Thyroid gland (tissue), 4 donors: ENCODE measurements at regions of chr19 and their contacts with region 1.

Region 1: GRCh38 chr19:36054119-36054732 is at the start of gene THAP8:
- DNase-seq: peak; percentile 100
- H3K4me3 ChIP-seq: peak within 1 kb of the TSS; percentile 39 to 73 (median 50)
- H3K27ac ChIP-seq: peak within 1 kb of the TSS; percentile 89 to 96 (median 91)
- H3K4me1 ChIP-seq: peaks cover 6 to 8% of the 10 kb centered on the region in 2 donors
- H3K27me3 ChIP-seq: no peaks in the 10 kb centered on the region
- CTCF ChIP-seq: peak in 5 of 6 experiments; percentile 13 to 74 (median 69)
- POLR2A ChIP-seq: peak; percentile 39 to 80
- total RNA-seq, gene THAP8: 5.0 to 14.2 (median 10.1) TPM

Region 2: GRCh38 chr19:36014029-36014924 is 39.9 kb before region 1 on chr19 and contains the start of gene ALKBH6:
- intact Hi-C with region 1: loop called (anchors 5 kb)
- DNase-seq: peak; percentile 100
- H3K4me3 ChIP-seq: peak within 1 kb of the TSS in 2 of 3 donors; percentile 53 to 66
- H3K27ac ChIP-seq: peak within 1 kb of the TSS; percentile 62 to 78 (median 68)
- H3K4me1 ChIP-seq: peaks cover 18% of the 10 kb centered on the region in 2 donors
- H3K27me3 ChIP-seq: no peaks in the 10 kb centered on the region
- CTCF ChIP-seq: no peak
- POLR2A ChIP-seq: peak in 1 of 2 donors; percentile 45
- total RNA-seq, gene ALKBH6: 15.4 to 60.9 (median 32.0) TPM

Region 3: DNA sequence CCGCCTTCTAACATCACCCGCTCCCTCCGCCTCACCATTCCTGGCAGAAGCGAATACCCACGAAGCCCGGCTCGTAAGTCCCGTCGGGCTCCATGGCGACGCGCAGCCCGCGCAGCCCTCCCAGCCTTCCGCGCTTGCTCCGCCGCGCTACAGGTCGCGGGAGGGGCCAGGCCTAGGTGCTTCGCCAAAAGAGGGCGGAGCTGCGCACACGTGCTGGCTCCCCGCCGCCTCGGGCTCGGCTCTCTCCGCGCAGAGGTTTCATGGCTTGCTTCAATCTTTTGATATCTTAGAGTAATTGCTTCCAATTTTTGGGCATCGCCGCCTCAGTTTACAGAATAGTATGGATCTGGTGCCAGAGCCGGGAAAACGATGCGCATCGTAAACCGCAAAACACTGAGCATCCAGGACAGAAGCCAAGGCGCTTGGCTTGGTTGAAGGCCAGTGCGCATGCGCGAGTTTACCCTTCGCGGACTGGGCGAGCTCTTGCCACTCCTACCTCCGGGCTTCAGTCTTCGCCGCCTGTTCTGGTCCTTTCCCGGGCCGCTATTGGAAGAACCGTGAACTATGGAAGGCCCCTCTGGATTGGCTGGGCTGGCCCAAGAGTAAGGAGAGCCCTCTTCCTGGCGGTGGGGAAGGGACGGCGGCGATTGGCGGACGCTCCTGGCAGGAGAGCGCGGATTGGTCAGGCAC is 60.7 kb after region 1 on chr19 and contains the start of gene POLR2I:
- intact Hi-C with region 1: loop called (anchors 5 kb)
- DNase-seq: peak; percentile 99
- H3K4me3 ChIP-seq: peak within 1 kb of the TSS; percentile 13 to 87 (median 60)
- H3K27ac ChIP-seq: peak within 1 kb of the TSS; percentile 24 to 84 (median 68)
- H3K4me1 ChIP-seq: peaks cover 15 to 16% of the 10 kb centered on the region in 2 donors
- H3K27me3 ChIP-seq: no peaks in the 10 kb centered on the region
- CTCF ChIP-seq: no peak
- POLR2A ChIP-seq: peak in 1 of 2 donors; percentile 71
- total RNA-seq, gene POLR2I: 53.7 to 101 (median 76.9) TPM

Region 4: DNA sequence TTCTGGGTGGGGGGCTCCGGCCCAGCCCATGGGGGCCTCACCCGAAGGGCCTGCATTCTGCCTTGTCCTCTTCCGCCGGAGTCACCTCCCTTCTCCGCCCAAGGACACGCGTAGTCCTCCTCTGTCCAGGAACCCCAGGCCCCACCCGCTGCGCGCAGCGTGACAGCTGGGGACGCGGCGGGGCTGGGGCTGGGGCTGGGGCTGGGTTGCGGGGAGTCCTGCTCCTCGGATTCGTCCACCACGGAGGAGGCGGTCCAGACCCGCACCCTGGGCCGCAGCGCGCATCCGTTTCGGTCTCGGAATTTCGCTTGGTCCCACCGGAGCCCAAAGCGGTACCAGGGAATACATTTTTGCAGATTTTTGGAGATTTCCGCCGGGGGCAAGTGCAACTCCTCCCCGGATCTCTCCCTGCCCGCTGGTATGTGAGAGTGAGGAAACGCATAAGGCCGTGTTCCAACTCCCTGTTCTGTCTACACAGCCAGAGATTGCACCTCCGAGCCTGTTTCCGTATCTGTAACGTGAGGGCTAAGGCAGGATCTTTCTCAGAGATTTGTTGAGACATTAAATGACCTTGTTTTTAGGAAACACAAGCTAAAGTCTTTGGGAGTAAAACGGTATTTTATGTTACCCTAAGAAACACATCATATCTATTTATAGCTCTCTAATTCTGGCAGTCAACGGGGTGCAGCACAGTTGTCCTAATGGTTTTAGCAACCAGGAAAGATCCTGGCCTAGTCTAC is 98.3 kb after region 1 on chr19 and contains the start of gene COX7A1:
- intact Hi-C with region 1: no loop called
- DNase-seq: peak; percentile 65 to 68
- H3K4me3 ChIP-seq: peak within 1 kb of the TSS in 2 of 3 donors; percentile 57 to 59
- H3K27ac ChIP-seq: peak within 1 kb of the TSS; percentile 93 to 94 (median 94)
- H3K4me1 ChIP-seq: peaks cover 0 to 15% of the 10 kb centered on the region in 2 donors
- H3K27me3 ChIP-seq: no peaks in the 10 kb centered on the region
- CTCF ChIP-seq: no peak
- POLR2A ChIP-seq: peak in 1 of 2 donors; percentile 46
- total RNA-seq, gene COX7A1: 8.0 to 36.7 (median 21.2) TPM